Activated CD4-positive, alpha-beta memory T cell treated with anti-CD3 and anti-CD28 coated beads for 36 hours (primary cell): ENCODE measurements at regions of chr15 and their contacts with region 1.

Region 1: DNA sequence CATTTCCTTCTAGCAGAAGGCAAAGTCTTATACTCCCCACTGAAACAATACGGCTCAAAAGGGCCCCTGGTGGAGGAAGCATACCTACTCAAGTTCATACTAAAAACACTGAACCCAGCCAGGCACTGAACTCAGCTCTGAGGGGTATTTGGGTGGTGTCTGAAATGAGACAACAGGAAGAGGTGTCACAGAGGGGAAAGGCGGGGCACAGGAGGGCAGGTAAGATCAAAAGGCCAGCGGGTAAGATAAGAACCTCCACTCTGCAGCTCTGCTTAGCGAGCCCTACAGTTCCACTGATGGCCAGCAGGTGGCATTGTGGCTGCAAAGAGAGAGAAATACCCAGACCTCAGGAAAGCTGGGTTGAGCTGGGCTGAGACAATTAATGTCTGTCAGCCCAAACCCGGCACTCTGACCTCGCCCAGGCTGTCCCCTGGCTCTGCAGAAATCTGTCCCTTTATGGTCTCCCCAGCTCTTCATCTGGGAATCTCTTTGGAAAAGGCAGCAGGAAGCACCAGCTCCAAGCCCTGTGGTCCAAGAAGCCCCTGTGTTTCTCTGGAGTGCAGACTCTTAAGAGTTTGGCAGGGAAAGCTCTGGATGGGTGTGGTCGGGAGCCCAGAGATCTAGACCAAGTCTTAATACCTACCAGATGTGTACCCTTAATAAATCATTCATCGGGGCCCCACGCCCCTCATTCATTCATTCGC is 8.4 kb downstream of the MFGE8 start:
- DNase-seq: peak; percentile 96
- H3K4me3 Mint-ChIP-seq: no peak overlapping the region
- H3K27ac Mint-ChIP-seq: peak overlapping the region; percentile 30
- H3K4me1 Mint-ChIP-seq: peaks cover 33% of the 10 kb centered on the region
- H3K27me3 Mint-ChIP-seq: no peaks in the 10 kb centered on the region

Region 2: DNA sequence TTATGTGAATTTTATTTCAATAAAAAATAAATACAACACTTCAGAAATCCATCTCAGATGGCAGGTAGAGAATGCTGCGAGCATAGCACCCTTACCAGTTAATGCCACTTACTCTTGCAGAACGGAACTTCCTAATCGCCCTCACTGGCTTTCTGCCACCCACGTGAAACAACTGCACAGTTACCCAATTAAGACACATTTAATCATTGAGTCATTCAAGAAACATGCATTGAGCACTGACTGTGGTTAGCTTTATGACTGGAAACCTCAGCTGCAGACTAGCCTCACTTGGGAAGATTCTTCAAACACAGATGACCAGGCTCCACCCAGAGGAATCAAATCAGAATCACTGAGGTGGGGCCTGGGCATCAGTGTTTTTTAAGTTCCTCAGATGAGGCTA is 14.0 kb after region 1 on chr15:
- CTCF ChIA-PET with region 1: interaction called, 51 read pairs
- POLR2A ChIA-PET with region 1: interaction called, 3 read pairs
- intact Hi-C with region 1: loop called (anchors 1 kb)
- DNase-seq: peak; percentile 83
- H3K4me3 Mint-ChIP-seq: no peak overlapping the region
- H3K27ac Mint-ChIP-seq: no peak overlapping the region
- H3K4me1 Mint-ChIP-seq: peaks cover 29% of the 10 kb centered on the region
- H3K27me3 Mint-ChIP-seq: peaks cover 17% of the 10 kb centered on the region

Region 3: GRCh38 chr15:89003865-89004725 is 99.3 kb after region 1 on chr15:
- CTCF ChIA-PET with region 1: interaction called, 24 read pairs
- POLR2A ChIA-PET with region 1: no interaction called
- intact Hi-C with region 1: loop called (anchors 1 kb)
- DNase-seq: peak; percentile 16
- H3K4me3 Mint-ChIP-seq: no peak overlapping the region
- H3K27ac Mint-ChIP-seq: no peak overlapping the region
- H3K4me1 Mint-ChIP-seq: no peaks in the 10 kb centered on the region
- H3K27me3 Mint-ChIP-seq: peaks cover 6% of the 10 kb centered on the region

Region 4: DNA sequence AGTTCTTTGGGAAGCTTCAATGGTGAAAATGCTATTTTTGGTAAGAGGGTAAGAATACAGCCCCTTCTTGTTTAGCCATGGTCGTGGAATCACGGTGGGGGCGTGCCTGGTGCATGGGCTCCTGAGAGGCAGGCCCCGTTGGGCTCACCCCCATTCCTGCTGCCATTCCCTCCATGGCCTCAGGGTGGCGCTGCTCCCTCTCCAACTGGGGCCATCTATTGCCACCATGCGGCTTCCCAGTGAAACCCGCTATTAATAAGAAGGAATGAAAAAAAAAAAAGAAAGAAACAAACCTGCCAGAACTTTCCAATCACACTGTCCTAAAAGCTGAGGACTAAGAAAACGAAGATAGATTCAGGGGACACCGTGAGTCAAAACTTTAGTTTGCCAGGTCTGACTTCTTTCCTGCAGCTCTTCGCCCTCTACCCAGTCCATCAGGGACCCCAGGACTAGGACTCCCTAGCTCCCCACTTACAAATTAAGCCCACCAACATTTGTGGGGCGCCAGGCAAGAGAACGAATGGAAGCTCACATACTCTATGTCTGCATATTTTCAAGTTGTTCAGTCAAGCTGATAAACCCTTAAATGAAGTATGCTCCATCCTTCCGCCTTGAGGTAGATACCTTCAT is 152.8 kb after region 1 on chr15:
- CTCF ChIA-PET with region 1: interaction called, 16 read pairs
- POLR2A ChIA-PET with region 1: no interaction called
- intact Hi-C with region 1: no loop called
- DNase-seq: peak; percentile 90
- H3K4me3 Mint-ChIP-seq: no peak overlapping the region
- H3K27ac Mint-ChIP-seq: no peak overlapping the region
- H3K4me1 Mint-ChIP-seq: peaks cover 11% of the 10 kb centered on the region
- H3K27me3 Mint-ChIP-seq: no peaks in the 10 kb centered on the region

Region 5: DNA sequence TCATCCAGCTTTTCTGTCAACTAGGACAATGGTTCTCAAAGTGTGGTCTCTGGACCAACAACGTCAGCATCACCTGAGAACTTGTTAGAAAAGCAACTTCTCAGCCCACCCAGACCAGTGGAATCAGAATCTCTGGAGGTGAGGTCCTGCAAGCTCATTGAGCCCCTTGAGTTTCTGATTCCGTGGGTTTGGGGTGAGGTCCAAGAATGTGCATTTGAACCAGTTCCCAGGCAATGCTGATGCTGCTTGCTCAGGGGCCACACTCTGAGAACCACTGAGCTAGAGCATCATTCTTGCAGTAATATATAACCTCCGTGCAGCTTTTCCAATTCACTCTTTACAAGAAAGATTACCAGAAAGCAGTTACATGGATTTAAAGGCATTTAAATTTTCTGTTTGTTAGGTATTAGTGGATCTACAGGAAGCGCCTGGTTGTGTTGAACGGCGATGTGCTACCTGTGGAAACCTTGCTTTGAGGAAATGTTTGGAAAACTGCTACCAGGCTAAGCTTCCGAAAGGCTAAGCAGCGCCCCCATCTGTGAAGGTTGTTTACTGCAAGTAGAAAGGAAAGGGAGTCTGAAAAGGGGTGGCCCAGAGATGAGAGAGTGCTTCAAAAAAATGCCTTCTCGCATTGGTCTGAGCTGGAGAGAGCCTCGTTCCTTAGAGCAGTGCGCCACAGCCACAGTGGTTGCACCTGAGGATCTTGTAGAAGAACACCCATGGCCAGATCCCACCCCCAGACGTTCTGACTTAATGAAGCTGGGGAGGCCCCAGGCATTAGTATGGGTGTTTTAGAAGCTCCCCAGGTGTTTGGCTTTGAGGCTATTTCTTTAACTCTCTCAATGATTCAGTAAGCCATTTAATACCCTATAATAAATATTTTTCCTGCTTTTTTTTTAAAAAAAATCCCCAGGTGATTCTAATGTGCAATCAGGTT is 266.6 kb after region 1 on chr15:
- CTCF ChIA-PET with region 1: interaction called, 20 read pairs
- POLR2A ChIA-PET with region 1: no interaction called
- intact Hi-C with region 1: no loop called
- DNase-seq: peak; percentile 53
- H3K4me3 Mint-ChIP-seq: no peak overlapping the region
- H3K27ac Mint-ChIP-seq: no peak overlapping the region
- H3K4me1 Mint-ChIP-seq: peaks cover 24% of the 10 kb centered on the region
- H3K27me3 Mint-ChIP-seq: no peaks in the 10 kb centered on the region